HEK293T (cell line): ENCODE measurements at regions of chr10 and their contacts with region 1.

Region 1: GRCh38 chr10:102450194-102450938 is 977 bp downstream of the C10orf95 start:
- DNase-seq: peak; percentile 86

Region 2: DNA sequence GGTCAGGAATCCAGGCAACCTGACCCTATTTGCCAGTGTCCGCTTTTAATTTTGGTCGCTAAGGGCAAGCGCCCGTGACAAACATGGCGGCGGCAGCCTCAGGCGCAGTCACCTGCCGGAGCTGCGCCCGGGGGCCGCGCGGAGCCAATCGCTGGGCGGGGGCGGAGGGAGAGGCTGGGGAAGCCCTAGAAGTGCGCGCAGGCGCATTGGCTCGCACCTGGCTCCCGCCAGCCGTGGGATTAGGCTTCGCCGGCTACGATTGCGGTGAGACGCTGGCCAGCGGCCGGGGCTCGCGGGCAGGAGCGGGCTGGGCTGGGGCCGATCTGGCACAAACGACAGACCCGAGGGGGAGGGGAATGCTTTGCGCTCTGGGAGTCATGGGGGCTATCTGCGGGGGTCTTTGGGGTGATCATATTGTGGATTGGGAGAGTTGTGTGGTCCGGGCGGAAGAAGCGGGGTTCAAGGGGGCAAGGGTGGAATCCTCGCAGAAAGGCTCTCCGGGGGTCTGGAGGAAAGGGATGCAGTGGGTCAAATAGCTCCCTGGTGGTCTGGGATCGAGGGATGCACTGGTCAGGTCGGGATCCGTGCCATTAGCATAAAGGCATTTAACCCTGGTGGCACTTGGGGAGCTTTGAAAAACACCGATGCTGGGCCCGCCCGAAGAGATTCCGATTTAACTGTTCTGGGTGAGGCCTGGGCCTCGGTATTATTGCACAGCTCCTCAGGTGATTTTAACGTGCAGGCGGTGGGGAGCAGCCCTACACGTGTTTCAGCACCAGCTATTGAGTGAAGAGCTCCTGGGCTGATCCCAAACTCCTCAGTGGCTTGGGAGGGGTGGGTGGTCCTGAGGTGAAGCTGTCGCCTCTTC is 11.1 kb after region 1 on chr10:
- CTCF ChIA-PET with region 1: interaction called, 24 read pairs
- POLR2A ChIA-PET with region 1: interaction called, 101 read pairs
- DNase-seq: peak; percentile 100